Dorsolateral prefrontal cortex (tissue), 120 donors: ENCODE measurements at regions of chr6 and their contacts with region 1.

Region 1: DNA sequence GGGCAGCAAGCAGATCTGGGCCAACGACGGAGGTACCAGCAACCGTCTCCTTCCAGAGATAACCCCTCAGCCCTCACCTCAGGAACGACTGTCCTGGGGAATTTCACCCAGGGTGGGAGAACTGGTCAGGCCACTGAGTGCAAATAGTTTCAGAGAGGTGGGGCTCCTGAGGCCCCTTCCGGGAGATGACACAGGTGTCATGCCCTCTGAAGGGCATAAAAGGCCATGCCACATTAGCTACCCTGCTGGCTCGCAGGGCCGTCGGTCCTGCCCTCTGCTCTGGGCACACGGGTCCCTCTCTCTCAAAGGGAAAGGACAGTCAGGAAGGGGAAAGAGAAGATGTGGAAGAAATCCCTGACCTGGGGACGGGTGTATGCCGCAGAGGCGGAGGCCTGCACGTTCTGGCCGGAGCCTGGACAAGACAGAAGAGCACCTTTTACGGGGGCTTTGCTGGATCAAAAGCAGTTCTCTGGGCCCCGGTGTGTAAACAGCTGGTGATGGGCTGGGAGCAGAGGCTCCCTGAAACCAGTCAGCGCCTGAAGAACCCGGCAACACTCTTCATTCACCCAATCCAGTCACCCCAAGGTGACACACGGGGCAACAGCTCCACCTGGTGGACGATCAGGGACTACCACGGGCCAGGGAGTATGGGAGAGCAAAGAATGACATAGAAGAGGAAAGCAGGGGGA is 6.4 kb upstream of the TAF8 start:
- DNase-seq: peak; percentile 80 to 92 (median 86)
- H3K4me3 ChIP-seq: peak overlapping the region in 38 of 59 donors; percentile 1 to 52 (median 26)
- H3K27ac ChIP-seq: peak overlapping the region in 45 of 59 donors; percentile 23 to 99 (median 88)
- H3K27me3 ChIP-seq: no peaks in the 10 kb centered on the region
- CTCF ChIP-seq: peak; percentile 88 to 99 (median 98)

Region 2: DNA sequence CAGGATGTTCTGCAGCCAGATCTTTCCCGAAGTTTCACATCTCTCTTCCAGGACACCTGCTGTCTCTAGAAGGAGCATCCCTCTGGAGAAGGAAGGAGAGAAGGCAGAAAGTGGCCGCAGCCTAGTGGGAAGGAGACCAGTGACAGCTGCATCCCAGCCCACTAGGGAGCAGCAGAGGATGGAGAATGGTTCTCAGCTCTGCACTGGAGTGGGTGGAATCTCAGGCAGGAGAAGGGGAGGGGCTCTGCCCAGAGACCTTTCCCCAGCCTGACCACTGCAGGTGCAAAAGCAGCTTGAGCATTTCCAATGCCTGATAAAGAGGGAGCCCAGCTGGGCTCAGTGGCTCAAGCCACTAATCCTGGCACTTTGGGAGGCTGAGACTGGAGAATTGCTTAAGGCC is 676.2 kb before region 1 on chr6:
- intact Hi-C with region 1: loop called in 1 of 2 experiments (anchors 2 kb)
- DNase-seq: peak; percentile 49 to 79 (median 74)
- H3K4me3 ChIP-seq: no peak overlapping the region
- H3K27ac ChIP-seq: no peak overlapping the region
- H3K27me3 ChIP-seq: peaks cover 0 to 61% (median 30%) of the 10 kb centered on the region in 45 donors
- CTCF ChIP-seq: peak; percentile 19 to 91 (median 80)

Region 3: GRCh38 chr6:41602864-41603608 is 440.9 kb before region 1 on chr6:
- intact Hi-C with region 1: loop called (anchors 10 kb)
- DNase-seq: peak; percentile 58 to 85 (median 76)
- H3K4me3 ChIP-seq: peak overlapping the region in 43 of 59 donors; percentile 2 to 52 (median 29)
- H3K27ac ChIP-seq: peak overlapping the region in 13 of 59 donors; percentile 7 to 52 (median 39)
- H3K27me3 ChIP-seq: no peaks in the 10 kb centered on the region
- CTCF ChIP-seq: peak; percentile 70 to 98 (median 92)

Region 4: DNA sequence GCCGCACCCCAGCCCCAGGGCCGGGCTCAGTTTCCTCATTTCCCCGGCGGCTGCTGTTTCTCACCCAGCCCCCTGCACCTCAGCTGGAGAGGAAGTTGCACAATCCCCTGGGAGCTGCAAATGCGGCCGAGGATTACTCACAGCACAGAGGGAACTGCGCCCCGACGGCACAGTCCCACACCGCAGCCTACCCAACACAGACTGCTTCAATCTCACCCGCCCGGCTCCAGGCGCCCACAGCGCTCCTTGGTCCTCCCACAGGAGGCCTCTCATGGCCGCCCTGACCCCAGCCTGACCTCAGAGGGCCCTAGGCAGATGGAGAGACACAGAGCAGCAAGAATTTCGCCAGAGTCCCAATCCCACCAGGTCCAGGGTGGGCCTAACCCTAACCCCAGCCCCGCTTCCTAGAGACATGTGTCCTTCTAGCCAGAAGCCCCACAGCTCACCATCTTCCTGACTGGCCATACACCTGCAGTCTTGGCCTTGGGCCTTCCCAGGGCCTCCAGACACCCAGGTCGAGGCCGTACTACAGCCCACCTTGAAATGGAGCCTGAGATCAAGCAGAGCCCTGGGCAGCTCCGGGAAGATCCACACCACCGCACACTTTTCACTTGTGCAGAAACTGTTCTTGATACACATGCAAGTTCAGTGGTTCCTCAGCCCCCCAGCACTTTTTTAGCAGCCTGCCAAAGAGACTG is 320.3 kb before region 1 on chr6:
- intact Hi-C with region 1: no loop called
- DNase-seq: peak in 6 of 10 donors; percentile 60 to 77 (median 67)
- H3K4me3 ChIP-seq: peak overlapping the region in 24 of 59 donors; percentile 4 to 39 (median 20)
- H3K27ac ChIP-seq: peak overlapping the region; percentile 37 to 100 (median 82)
- H3K27me3 ChIP-seq: no peaks in the 10 kb centered on the region
- CTCF ChIP-seq: no peak

Region 5: GRCh38 chr6:41779793-41780545 is 264.0 kb before region 1 on chr6 and contains the start of gene FRS3:
- intact Hi-C with region 1: loop called (anchors 1 to 2 kb)
- DNase-seq: peak; percentile 95 to 100 (median 99)
- H3K4me3 ChIP-seq: peak within 1 kb of the TSS; percentile 61 to 99 (median 84)
- H3K27ac ChIP-seq: peak within 1 kb of the TSS in 54 of 59 donors; percentile 32 to 94 (median 79)
- H3K27me3 ChIP-seq: no peaks in the 10 kb centered on the region
- CTCF ChIP-seq: peak; percentile 60 to 97 (median 88)
- total RNA-seq, gene FRS3: 20.4 to 52.8 (median 33.0) TPM

Region 6: GRCh38 chr6:41846666-41847237 is 197.2 kb before region 1 on chr6:
- intact Hi-C with region 1: loop called in 1 of 2 experiments (anchors 2 kb)
- DNase-seq: peak in 1 of 10 donors; percentile 24
- H3K4me3 ChIP-seq: no peak overlapping the region
- H3K27ac ChIP-seq: peak overlapping the region in 7 of 59 donors; percentile 26 to 59 (median 39)
- H3K27me3 ChIP-seq: no peaks in the 10 kb centered on the region
- CTCF ChIP-seq: peak in 55 of 56 donors; percentile 23 to 82 (median 68)

Region 7: GRCh38 chr6:41920921-41921711 is 122.8 kb before region 1 on chr6 and contains the starts of genes BYSL and MED20:
- intact Hi-C with region 1: loop called (anchors 5 kb)
- DNase-seq: peak; percentile 92 to 97 (median 96)
- H3K4me3 ChIP-seq: peak within 1 kb of the TSS; percentile 68 to 100 (median 91)
- H3K27ac ChIP-seq: peak within 1 kb of the TSS; percentile 91 to 100 (median 98)
- H3K27me3 ChIP-seq: no peaks in the 10 kb centered on the region
- CTCF ChIP-seq: peak; percentile 93 to 100 (median 99)
- total RNA-seq, gene BYSL: 6.6 to 16.7 (median 10.7) TPM
- total RNA-seq, gene MED20: 7.2 to 21.0 (median 14.8) TPM

Region 8: GRCh38 chr6:41984623-41985022 is 59.3 kb before region 1 on chr6:
- intact Hi-C with region 1: no loop called
- DNase-seq: no peak
- H3K4me3 ChIP-seq: no peak overlapping the region
- H3K27ac ChIP-seq: no peak overlapping the region
- H3K27me3 ChIP-seq: no peaks in the 10 kb centered on the region
- CTCF ChIP-seq: no peak

Region 9: GRCh38 chr6:42217519-42218367 is 173.8 kb after region 1 on chr6 and contains the start of gene MRPS10:
- intact Hi-C with region 1: loop called in 1 of 2 experiments (anchors 10 kb)
- DNase-seq: peak; percentile 87 to 96 (median 92)
- H3K4me3 ChIP-seq: peak within 1 kb of the TSS; percentile 54 to 97 (median 80)
- H3K27ac ChIP-seq: peak within 1 kb of the TSS in 54 of 59 donors; percentile 2 to 88 (median 68)
- H3K27me3 ChIP-seq: no peaks in the 10 kb centered on the region
- CTCF ChIP-seq: peak in 52 of 56 donors; percentile 15 to 75 (median 49)
- total RNA-seq, gene MRPS10: 18.8 to 41.4 (median 29.6) TPM

Region 10: GRCh38 chr6:42547407-42548329 is 503.7 kb after region 1 on chr6:
- intact Hi-C with region 1: no loop called
- DNase-seq: peak; percentile 83 to 96 (median 91)
- H3K4me3 ChIP-seq: peak overlapping the region; percentile 48 to 91 (median 68)
- H3K27ac ChIP-seq: peak overlapping the region; percentile 35 to 96 (median 90)
- H3K27me3 ChIP-seq: peaks cover 0 to 2% (median 0%) of the 10 kb centered on the region in 45 donors
- CTCF ChIP-seq: peak; percentile 87 to 100 (median 98)